ENCODE measurements at regions of chr17 and their contacts with region 1.

Region 1: GRCh38 chr17:79104898-79105600 is 30.4 kb downstream of the ENGASE start:
- DNase-seq: no peak
- ATAC-seq: no peak
- H3K4me3 ChIP-seq: no peak overlapping the region
- H3K27ac ChIP-seq: no peak overlapping the region
- H3K4me1 ChIP-seq: no peaks in the 10 kb centered on the region
- H3K27me3 ChIP-seq: no peaks in the 10 kb centered on the region; the same call in 1 of the 2 replicates
- CTCF ChIP-seq: no peak

Region 2: DNA sequence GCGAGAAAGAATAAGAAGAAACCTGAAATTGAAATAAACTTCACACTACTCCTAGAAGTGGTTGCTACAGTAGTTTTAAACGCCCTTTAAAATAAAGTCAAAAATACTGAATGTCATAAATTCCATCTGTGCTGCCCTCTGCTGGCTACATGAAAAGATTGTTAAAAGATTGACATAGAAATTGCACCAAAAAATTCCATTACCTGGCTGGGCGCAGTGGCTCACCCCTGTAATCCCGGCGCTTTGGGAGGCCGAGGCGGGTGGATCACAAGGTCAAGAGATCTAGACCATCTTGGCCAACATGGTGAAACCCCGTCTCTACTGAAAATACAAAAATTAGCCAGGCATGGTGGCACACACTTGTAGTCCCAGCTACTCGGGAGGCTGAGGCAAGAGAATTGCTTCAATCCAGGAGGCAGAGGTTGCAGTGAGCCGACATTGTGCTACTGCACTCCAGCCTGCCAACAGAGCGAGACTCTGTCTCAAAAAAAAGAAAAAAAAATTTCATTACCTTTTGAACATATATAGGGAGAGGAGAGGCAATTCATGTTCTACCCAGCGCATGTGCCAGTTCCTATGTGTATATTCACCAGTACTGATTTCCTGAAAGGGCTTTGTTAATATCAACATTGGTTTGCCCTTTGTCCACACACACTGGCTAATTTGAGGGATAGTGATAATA is 359.5 kb before region 1 on chr17:
- CTCF ChIA-PET with region 1: no interaction called
- POLR2A ChIA-PET with region 1: no interaction called
- in situ Hi-C with region 1: no loop called
- intact Hi-C with region 1: no loop called
- DNase-seq: no peak
- ATAC-seq: peak; percentile 56; the same call in 1 of the 2 replicates
- H3K4me3 ChIP-seq: no peak overlapping the region
- H3K27ac ChIP-seq: no peak overlapping the region
- H3K4me1 ChIP-seq: peaks cover 4% of the 10 kb centered on the region; the same call in 1 of the 2 replicates
- H3K27me3 ChIP-seq: no peaks in the 10 kb centered on the region
- CTCF ChIP-seq: peak; percentile 84

Region 3: GRCh38 chr17:79065105-79065670 is 39.9 kb before region 1 on chr17:
- CTCF ChIA-PET with region 1: no interaction called
- POLR2A ChIA-PET with region 1: no interaction called
- in situ Hi-C with region 1: no loop called
- intact Hi-C with region 1: no loop called
- DNase-seq: no peak
- ATAC-seq: 0 out of 2 replicates have a peak, but pooled peaks have one; percentile 70
- H3K4me3 ChIP-seq: no peak overlapping the region
- H3K27ac ChIP-seq: no peak overlapping the region
- H3K4me1 ChIP-seq: no peaks in the 10 kb centered on the region
- H3K27me3 ChIP-seq: no peaks in the 10 kb centered on the region
- CTCF ChIP-seq: peak; percentile 80; the same call in 1 of the 2 replicates

Region 4: GRCh38 chr17:79192503-79193351 is 87.7 kb after region 1 on chr17:
- CTCF ChIA-PET with region 1: no interaction called
- POLR2A ChIA-PET with region 1: no interaction called
- in situ Hi-C with region 1: no loop called
- intact Hi-C with region 1: no loop called
- DNase-seq: no peak
- ATAC-seq: no peak
- H3K4me3 ChIP-seq: no peak overlapping the region
- H3K27ac ChIP-seq: no peak overlapping the region
- H3K4me1 ChIP-seq: no peaks in the 10 kb centered on the region
- H3K27me3 ChIP-seq: peaks cover 30% of the 10 kb centered on the region; the same call in 1 of the 2 replicates
- CTCF ChIP-seq: no peak

Region 5: GRCh38 chr17:79220713-79221291 is 115.8 kb after region 1 on chr17:
- CTCF ChIA-PET with region 1: interaction called, 12 read pairs
- POLR2A ChIA-PET with region 1: no interaction called
- in situ Hi-C with region 1: no loop called
- intact Hi-C with region 1: no loop called
- DNase-seq: no peak
- ATAC-seq: peak; percentile 59
- H3K4me3 ChIP-seq: peak overlapping the region in 1 of 2 experiments; percentile 10; a peak in 2 of 4 replicates
- H3K27ac ChIP-seq: no peak overlapping the region
- H3K4me1 ChIP-seq: peaks cover 4% of the 10 kb centered on the region; the same call in 1 of the 2 replicates
- H3K27me3 ChIP-seq: peaks cover 14% of the 10 kb centered on the region
- CTCF ChIP-seq: no peak

Region 6: DNA sequence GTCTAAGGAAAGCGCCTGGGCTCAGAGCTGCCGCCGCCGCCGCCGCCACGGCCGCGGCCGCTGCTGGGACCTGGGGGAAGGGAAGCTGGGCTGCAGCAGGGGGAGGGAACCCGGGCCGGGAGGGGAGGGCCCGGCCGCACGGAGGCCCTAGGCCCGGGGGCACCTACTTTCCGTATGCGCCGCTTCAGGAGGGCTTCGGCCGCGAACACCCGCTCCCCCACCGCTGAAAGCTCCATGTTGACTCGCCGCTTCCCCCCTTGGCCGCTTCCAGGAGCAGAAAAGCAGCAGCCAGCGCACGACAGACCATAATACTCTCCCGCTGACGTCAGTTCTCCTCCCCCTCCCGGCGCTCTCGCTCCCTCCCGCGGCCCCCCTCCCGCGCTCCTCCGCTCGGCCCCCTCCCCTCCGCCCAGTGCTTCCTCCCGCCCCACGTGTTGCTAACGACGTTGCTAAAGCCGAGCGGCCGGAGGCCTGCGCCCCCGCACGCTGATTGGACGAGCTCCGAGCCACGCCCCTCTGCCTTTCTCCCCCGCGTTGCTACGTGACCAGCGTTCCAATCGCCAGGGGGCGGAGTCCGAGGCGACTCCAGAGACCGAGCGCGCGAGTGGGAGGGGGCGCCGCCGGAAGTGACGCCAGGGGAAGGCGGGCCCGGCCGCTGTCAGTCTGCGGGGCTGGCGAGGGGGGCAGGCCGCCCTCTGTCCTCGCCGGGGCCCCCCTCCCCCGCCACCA is 691.9 kb after region 1 on chr17 and contains the start of gene CBX8:
- CTCF ChIA-PET with region 1: no interaction called
- POLR2A ChIA-PET with region 1: interaction called, 12 read pairs
- in situ Hi-C with region 1: no loop called
- intact Hi-C with region 1: no loop called
- DNase-seq: peak; percentile 91
- ATAC-seq: peak; percentile 81
- H3K4me3 ChIP-seq: peak within 1 kb of the TSS; percentile 82 to 91
- H3K27ac ChIP-seq: peak within 1 kb of the TSS; percentile 75
- H3K4me1 ChIP-seq: peaks cover 47% of the 10 kb centered on the region
- H3K27me3 ChIP-seq: no peaks in the 10 kb centered on the region
- CTCF ChIP-seq: no peak
- total RNA-seq, gene CBX8: 15.3 TPM